Activated T-helper 1 cell treated with anti-CD3 and anti-CD28 coated beads, Interleukin-12 subunit alpha, Interleukin-12 subunit beta, Interleukin-2, Interleukin-4 antibody, amounts not matched to agents 30 ng/mL and 10 ng/mL and 1 ng/mL, durations not matched to agents 14 hours and 24 hours and 36 hours (primary cell): ENCODE measurements at regions of chr2 and their contacts with region 1.

Region 1: GRCh38 chr2:175366815-175367214 is 185.3 kb upstream of the ATP5MC3 start:
- DNase-seq: no peak
- H3K4me3 Mint-ChIP-seq: no peak overlapping the region
- H3K27ac Mint-ChIP-seq: no peak overlapping the region
- H3K4me1 Mint-ChIP-seq: no peaks in the 10 kb centered on the region
- H3K27me3 Mint-ChIP-seq: peaks cover 7% of the 10 kb centered on the region

Region 2: DNA sequence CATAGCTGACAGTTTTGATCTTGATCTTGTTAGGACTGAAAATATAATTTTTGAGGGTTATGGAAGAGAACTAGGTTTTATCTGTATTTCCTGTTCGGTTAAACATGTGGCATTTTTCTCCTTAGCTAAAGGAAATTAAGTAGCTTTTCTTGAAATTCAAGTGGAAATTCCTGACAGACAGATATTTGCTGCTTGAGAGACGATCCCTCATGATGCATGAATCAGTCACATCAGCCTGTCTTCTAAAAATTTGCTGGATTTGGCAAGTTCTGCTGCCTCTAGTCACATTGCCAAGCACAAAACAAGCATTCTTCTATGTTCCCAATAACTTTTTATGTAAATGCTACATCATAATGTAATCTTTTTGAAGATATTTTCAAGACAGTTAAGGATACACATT is 16.5 kb after region 1 on chr2:
- intact Hi-C with region 1: no loop called
- DNase-seq: no peak
- H3K4me3 Mint-ChIP-seq: no peak overlapping the region
- H3K27ac Mint-ChIP-seq: no peak overlapping the region
- H3K4me1 Mint-ChIP-seq: no peaks in the 10 kb centered on the region
- H3K27me3 Mint-ChIP-seq: no peaks in the 10 kb centered on the region

Region 3: DNA sequence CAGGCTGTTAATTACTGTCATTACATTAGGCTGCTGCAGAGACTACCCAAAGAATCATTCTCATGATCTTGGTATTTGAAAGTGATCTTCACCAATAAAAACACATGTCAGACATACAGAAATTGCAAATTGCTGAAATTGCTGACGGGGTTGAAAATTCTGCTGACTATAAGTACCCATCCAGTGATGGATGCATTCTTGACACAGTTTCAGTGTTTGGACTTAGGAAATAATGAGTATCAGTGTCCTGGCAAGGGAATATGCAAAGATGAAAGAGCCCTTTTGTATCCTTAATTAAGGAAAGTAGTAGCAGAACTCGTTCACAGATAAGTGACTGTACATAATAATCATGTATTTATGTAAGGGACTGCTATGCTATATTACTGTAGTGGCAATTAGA is 35.8 kb after region 1 on chr2:
- intact Hi-C with region 1: no loop called
- DNase-seq: no peak
- H3K4me3 Mint-ChIP-seq: no peak overlapping the region
- H3K27ac Mint-ChIP-seq: no peak overlapping the region
- H3K4me1 Mint-ChIP-seq: no peaks in the 10 kb centered on the region
- H3K27me3 Mint-ChIP-seq: peaks cover 5% of the 10 kb centered on the region

Region 4: DNA sequence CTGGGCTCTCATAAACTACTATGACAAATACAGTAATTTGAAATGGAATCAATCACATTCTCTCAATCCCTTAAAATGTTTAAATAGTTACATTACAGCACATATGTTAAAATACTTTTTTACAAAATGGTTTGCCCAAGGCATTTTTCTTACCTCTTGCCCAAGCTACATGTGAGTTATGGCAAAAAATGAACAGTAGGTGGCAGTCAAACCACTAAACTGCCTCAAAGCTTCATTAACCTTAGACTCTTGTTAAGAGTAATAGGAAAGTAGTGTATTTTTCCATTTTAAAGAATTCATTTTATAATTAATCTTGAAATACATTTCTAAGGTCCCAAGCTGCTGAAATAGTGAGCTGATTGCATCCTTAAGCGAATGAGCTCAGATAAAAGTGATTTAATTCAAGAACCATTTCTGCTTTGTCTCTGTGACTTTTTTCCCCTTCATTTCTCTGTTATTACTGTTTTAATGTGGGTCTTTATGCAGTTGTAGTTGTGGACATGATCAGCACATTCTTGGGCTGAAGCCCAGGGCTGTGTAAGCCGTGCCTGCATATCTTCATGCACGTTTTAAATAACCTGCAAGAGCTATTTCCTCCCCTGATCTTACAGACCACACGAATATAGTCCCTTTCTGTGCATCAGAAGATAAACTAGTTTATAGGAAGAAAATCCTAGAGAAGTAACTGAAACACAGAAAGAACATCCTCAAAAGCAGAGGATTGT is 323.5 kb after region 1 on chr2:
- intact Hi-C with region 1: loop called (anchors 1 kb)
- DNase-seq: peak; percentile 9
- H3K4me3 Mint-ChIP-seq: no peak overlapping the region
- H3K27ac Mint-ChIP-seq: no peak overlapping the region
- H3K4me1 Mint-ChIP-seq: no peaks in the 10 kb centered on the region
- H3K27me3 Mint-ChIP-seq: peaks cover 7% of the 10 kb centered on the region

Region 5: DNA sequence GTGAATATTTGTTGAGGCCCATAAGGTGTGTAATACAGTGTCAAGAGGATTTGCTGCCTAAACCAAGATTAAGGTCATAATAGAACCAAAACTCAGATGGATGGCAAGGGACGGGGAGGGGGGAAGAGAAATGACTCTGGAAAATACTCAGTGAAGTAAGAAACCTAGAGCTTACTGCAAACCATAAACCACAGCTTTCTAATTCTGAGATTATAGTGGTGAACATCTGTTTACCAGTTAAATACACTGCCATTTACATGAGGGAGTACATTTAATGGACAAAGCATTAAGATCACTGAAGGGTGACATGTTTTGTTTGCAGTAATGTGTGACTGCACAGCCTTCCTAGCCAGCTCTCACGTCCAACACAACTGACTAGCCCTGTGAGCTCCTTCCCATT is 697.1 kb after region 1 on chr2:
- intact Hi-C with region 1: loop called (anchors 10 kb)
- DNase-seq: no peak
- H3K4me3 Mint-ChIP-seq: no peak overlapping the region
- H3K27ac Mint-ChIP-seq: no peak overlapping the region
- H3K4me1 Mint-ChIP-seq: peaks cover 10% of the 10 kb centered on the region
- H3K27me3 Mint-ChIP-seq: peaks cover 70% of the 10 kb centered on the region

Region 6: DNA sequence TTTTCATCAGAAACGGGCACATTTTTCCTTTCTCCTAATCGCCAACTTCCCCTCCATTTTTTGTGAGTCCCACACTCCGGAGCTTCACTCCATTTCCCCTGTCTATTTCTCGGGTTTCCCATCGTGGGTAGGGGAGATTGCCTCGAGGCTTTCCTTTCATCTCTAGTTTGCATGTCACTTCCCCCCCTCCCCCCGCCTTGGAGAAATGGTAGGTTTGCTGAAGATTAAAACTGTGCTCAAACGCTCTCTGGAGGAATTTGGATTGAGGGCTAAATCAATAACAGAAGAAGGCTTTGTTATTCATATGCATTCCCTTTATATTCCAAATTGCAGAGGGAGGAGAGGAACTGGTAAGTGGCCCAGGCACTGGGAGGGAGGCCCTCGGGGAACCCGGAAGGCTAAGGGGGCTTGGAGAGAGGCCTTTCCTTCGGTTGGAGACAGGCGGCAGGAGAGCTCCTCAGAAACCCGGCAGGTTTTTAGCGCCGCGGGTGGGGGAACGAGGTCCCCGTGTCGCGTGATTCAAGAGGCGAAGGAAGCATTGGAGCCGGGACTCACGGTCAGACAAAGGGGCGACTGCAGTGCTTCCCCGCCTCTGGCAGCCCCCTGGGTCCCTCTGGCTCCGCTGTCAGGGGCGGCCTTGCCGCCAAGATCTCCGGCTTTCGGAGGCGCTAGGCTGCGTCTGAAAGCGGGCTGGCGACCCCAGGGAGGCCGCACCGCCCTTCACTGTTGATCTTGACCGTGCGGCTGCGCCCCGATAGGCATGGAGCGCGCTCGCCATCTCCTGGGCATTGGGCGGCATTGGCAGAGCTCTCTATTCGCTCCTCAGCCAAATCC is 730.4 kb after region 1 on chr2:
- intact Hi-C with region 1: loop called (anchors 1 kb)
- DNase-seq: peak; percentile 31
- H3K4me3 Mint-ChIP-seq: peak overlapping the region; percentile 78
- H3K27ac Mint-ChIP-seq: peak overlapping the region; percentile 25
- H3K4me1 Mint-ChIP-seq: peaks cover 14% of the 10 kb centered on the region
- H3K27me3 Mint-ChIP-seq: peaks cover 83% of the 10 kb centered on the region

Region 7: DNA sequence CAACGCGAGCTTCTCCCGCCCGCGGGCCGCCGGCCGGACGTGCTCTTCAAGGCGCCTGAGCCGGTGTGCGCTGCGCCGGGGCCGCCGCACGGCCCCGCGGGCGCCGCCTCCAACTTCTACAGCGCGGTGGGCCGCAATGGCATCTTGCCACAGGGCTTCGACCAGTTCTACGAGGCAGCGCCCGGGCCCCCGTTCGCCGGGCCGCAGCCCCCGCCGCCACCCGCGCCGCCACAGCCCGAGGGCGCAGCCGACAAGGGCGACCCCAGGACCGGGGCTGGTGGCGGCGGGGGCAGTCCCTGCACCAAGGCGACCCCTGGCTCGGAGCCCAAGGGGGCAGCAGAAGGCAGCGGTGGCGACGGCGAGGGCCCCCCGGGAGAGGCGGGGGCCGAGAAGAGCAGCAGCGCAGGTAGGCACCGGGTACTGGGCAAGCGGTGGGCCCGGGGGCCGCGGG is 740.9 kb after region 1 on chr2:
- intact Hi-C with region 1: no loop called
- DNase-seq: no peak
- H3K4me3 Mint-ChIP-seq: no peak overlapping the region
- H3K27ac Mint-ChIP-seq: no peak overlapping the region
- H3K4me1 Mint-ChIP-seq: peaks cover 7% of the 10 kb centered on the region
- H3K27me3 Mint-ChIP-seq: peaks cover 78% of the 10 kb centered on the region

Region 8: DNA sequence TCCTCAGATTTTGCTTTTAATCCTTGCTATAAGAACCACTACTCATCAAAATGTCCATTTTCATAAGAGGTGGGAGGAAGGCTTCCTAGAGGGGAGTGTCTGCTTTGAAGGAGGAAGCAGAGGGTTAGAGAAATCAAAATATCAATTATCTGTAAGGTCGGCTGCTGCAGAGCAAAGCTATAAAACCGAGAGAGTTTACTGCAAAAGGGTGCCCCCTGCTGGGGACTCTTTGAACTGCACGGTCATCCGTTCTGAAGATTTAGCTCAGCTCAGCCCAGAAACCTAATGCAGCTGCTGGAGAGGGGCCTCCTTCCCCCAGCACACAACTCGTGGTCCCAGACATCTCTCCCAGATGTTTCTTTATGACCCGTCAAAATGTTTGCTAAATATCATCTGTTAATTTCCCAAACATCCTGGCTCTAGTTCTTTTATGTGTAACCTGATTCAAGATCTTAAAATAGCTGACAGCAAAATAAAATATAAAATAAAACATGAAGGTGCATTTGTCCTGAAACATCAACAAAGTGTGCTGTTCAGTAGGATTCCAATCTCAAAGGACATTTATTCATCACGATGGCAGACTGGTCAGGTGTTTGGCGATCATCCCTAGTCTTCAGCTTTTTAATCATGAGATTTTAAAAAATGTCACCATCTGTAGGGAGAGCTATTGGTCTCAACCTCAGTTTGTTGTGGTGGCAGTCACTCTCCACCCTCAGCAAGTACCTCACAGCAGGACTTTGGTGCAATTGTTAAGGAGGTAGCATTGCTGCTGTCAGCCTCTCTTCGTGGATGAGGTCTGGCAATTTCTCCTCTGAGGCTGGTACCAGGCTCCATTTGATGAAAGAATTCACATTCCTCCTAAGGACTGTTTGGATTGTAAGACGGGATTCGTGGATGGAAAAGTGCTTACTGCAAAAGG is 1088.3 kb after region 1 on chr2:
- intact Hi-C with region 1: loop called (anchors 10 kb)
- DNase-seq: peak; percentile 59
- H3K4me3 Mint-ChIP-seq: no peak overlapping the region
- H3K27ac Mint-ChIP-seq: no peak overlapping the region
- H3K4me1 Mint-ChIP-seq: no peaks in the 10 kb centered on the region
- H3K27me3 Mint-ChIP-seq: peaks cover 13% of the 10 kb centered on the region

Region 9: GRCh38 chr2:176653479-176654443 is 1286.9 kb after region 1 on chr2:
- intact Hi-C with region 1: loop called (anchors 5 kb)
- DNase-seq: no peak
- H3K4me3 Mint-ChIP-seq: no peak overlapping the region
- H3K27ac Mint-ChIP-seq: no peak overlapping the region
- H3K4me1 Mint-ChIP-seq: peaks cover 18% of the 10 kb centered on the region
- H3K27me3 Mint-ChIP-seq: peaks cover 45% of the 10 kb centered on the region